A673 (cell line): ENCODE measurements at regions of chr20 and their contacts with region 1.

Region 1: GRCh38 chr20:49276961-49277785 is 684 bp downstream of the ZNFX1 start:
- DNase-seq: peak; percentile 32
- H3K4me3 ChIP-seq: peak overlapping the region; percentile 81
- H3K27ac ChIP-seq: peak overlapping the region; percentile 94
- H3K4me1 ChIP-seq: peaks cover 3% of the 10 kb centered on the region
- H3K27me3 ChIP-seq: no peaks in the 10 kb centered on the region
- CTCF ChIP-seq: no peak

Region 2: GRCh38 chr20:49151436-49151835 is 125.7 kb before region 1 on chr20:
- CTCF ChIA-PET with region 1: no interaction called
- POLR2A ChIA-PET with region 1: interaction called, 25 read pairs
- intact Hi-C with region 1: no loop called
- DNase-seq: no peak
- H3K4me3 ChIP-seq: no peak overlapping the region
- H3K27ac ChIP-seq: no peak overlapping the region
- H3K4me1 ChIP-seq: no peaks in the 10 kb centered on the region
- H3K27me3 ChIP-seq: no peaks in the 10 kb centered on the region
- CTCF ChIP-seq: no peak